ENCODE measurements at regions of chr11 and their contacts with region 1.

Region 1: GRCh38 chr11:74929431-74930363 is 19.2 kb downstream of the XRRA1 start:
- DNase-seq: peak in 4 of 5 donors; percentile 52 to 76 (median 61)
- ATAC-seq: peak; percentile 71 to 90 (median 88)
- H3K4me3 ChIP-seq: no peak overlapping the region
- H3K27ac ChIP-seq: no peak overlapping the region
- H3K4me1 ChIP-seq: no peaks in the 10 kb centered on the region
- H3K27me3 ChIP-seq: no peaks in the 10 kb centered on the region
- CTCF ChIP-seq: peak; percentile 70 to 89 (median 82)
- POLR2A ChIP-seq: no peak

Region 2: DNA sequence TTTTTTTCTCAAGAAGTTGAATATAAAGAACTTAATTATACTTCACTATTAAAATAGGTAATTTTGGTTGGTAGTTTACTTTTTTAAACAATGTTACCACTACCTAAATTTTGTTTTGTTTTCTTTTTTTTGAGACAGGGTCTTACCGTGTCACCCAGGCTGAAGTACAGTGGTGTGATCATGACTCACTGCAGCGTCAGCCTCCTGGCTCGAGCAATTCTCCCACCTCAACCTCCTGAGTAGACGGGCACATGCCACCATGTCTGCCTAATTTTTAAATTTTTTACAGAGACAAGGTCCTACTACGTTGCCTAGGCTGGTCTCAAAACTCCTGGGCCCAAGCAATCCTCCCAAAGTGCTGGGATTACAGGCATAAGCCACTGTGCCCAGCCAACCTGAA is 37.0 kb after region 1 on chr11:
- intact Hi-C with region 1: no loop called
- DNase-seq: no peak
- ATAC-seq: no peak
- H3K4me3 ChIP-seq: no peak overlapping the region
- H3K27ac ChIP-seq: no peak overlapping the region
- H3K4me1 ChIP-seq: peaks cover 0 to 35% (median 13%) of the 10 kb centered on the region in 12 donors
- H3K27me3 ChIP-seq: no peaks in the 10 kb centered on the region
- CTCF ChIP-seq: no peak
- POLR2A ChIP-seq: no peak

Region 3: DNA sequence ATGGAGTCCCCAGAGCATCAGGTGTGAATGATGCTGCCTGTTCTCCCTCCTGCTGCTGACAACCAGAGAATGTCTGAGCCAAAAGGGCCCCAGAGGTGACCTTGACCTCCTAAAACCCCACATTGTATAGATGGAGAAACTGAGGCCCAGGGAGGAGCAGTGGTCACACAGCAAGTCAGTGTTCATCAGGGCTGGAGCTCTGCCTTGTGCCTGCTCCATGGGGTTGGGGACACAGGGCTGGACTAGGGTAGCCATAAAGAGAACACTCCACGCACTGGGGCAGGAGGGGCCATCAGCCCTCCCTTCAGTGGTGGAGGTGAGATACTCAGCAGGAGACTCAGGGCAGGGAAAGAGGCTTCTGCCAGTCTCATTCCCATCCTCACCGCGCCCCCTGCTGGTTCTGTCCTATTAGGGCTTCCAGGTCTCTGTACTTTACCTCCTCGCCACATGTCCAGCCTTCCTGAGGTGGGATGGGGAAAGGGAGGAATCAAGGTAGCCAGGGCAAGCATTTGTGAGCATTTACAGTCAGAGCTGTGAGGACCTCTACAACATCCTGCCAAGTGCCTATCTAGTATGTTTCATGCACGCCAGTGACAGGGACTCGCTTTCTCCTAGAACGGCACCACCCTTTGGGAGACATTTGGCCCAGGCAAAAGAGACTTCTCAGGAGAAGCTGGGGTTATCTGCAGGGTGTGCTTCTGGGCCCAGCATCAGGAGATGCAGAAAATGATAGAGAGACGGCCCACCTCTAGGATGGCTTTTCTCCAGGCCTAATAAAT is 102.3 kb after region 1 on chr11:
- intact Hi-C with region 1: loop called (anchors 1 to 5 kb)
- DNase-seq: peak; percentile 65 to 87 (median 76)
- ATAC-seq: peak; percentile 49 to 84 (median 78)
- H3K4me3 ChIP-seq: no peak overlapping the region
- H3K27ac ChIP-seq: no peak overlapping the region
- H3K4me1 ChIP-seq: peaks cover 0 to 11% (median 0%) of the 10 kb centered on the region in 12 donors
- H3K27me3 ChIP-seq: no peaks in the 10 kb centered on the region
- CTCF ChIP-seq: peak; percentile 50 to 74 (median 64)
- POLR2A ChIP-seq: no peak

Region 4: DNA sequence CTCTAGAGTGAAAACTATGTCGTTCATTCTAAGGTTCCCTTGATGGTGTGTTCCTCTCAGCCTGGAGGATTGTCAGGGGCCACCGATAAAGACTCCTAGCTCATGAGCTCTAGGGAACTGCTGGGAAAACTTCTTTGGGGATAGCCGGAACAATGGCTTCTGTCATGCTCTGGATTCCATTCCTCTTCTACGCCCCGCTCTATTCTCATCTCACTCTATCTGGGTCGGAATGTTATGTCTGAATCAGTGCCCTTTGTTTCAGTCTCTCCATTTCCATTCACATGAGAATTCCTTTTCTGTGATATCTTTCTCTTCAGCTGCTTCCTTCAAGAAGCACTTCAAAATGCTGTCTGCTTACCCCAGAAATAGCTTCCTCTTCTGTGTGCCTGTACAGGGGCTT is 204.3 kb after region 1 on chr11:
- intact Hi-C with region 1: loop called in 1 of 10 experiments (anchors 10 kb)
- DNase-seq: no peak
- ATAC-seq: no peak
- H3K4me3 ChIP-seq: no peak overlapping the region
- H3K27ac ChIP-seq: no peak overlapping the region
- H3K4me1 ChIP-seq: no peaks in the 10 kb centered on the region
- H3K27me3 ChIP-seq: peaks cover 0 to 42% (median 8%) of the 10 kb centered on the region in 9 donors
- CTCF ChIP-seq: no peak
- POLR2A ChIP-seq: no peak

Region 5: GRCh38 chr11:75248690-75249268 is 319.1 kb after region 1 on chr11:
- intact Hi-C with region 1: loop called (anchors 1 to 5 kb)
- DNase-seq: peak; percentile 84 to 91 (median 87)
- ATAC-seq: peak; percentile 88 to 94 (median 92)
- H3K4me3 ChIP-seq: no peak overlapping the region
- H3K27ac ChIP-seq: no peak overlapping the region
- H3K4me1 ChIP-seq: peaks cover 0 to 3% (median 0%) of the 10 kb centered on the region in 12 donors
- H3K27me3 ChIP-seq: peaks cover 0 to 21% (median 5%) of the 10 kb centered on the region in 9 donors
- CTCF ChIP-seq: peak in 11 of 12 donors; percentile 95 to 100 (median 99)
- POLR2A ChIP-seq: no peak